CD4-positive, alpha-beta memory T cell (primary cell): ENCODE measurements at regions of chr14 and their contacts with region 1.

Region 1: GRCh38 chr14:55446218-55446654 is 5.8 kb upstream of the TBPL2 start:
- DNase-seq: peak; percentile 40 to 57 (median 53)
- H3K4me3 ChIP-seq: no peak overlapping the region
- H3K4me3 Mint-ChIP-seq: no peak overlapping the region
- H3K27ac ChIP-seq: no peak overlapping the region
- H3K27ac Mint-ChIP-seq: no peak overlapping the region
- H3K4me1 ChIP-seq: no peaks in the 10 kb centered on the region
- H3K4me1 Mint-ChIP-seq: peaks cover 0 to 3% (median 1%) of the 10 kb centered on the region in 4 donors
- H3K27me3 ChIP-seq: no peaks in the 10 kb centered on the region
- H3K27me3 Mint-ChIP-seq: peaks cover 0 to 1% of the 10 kb centered on the region in 2 donors

Region 2: DNA sequence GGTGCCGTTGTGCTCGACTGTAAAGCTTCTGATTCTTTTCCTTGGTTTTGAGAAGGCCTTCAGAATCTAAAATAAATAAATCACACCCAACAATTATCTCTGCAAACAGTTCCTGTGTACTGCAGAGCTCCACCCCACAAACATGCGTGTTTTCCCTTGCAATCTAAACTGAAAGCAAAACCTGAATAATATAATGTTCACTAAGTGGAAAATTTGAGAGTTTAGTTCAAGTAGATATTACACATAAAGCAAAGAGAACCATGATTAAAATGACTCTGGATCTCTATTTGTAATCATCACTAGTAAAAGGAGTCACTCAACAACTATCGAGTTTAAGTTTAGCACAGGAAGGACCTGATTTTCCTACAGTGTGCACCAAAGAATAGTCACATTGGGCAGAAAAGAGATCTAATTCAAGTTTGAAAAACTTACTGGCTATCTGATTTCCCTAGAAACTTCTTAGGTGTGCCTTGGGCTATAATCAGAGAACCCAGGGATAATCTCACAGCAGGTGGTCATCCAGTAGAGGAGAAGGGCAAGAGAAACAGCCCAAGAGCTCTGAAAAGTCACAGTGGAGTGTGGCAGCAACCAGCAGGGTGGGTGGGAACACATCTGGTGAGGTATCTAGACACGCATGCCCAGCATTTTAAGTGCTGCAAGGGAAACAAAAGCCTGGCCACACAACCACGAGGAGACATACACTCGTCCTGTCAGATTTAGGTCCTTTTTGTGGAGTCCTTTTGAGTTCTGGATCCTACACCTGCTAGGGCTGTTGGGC is 60.0 kb before region 1 on chr14:
- CTCF ChIA-PET with region 1: interaction called, 10 read pairs
- POLR2A ChIA-PET with region 1: no interaction called
- intact Hi-C with region 1: no loop called
- DNase-seq: peak in 4 of 5 donors; percentile 13 to 39 (median 16)
- H3K4me3 ChIP-seq: peak overlapping the region in 1 of 2 donors; percentile 23
- H3K4me3 Mint-ChIP-seq: peak overlapping the region; percentile 56 to 86 (median 84)
- H3K27ac ChIP-seq: peak overlapping the region; percentile 59
- H3K27ac Mint-ChIP-seq: peak overlapping the region; percentile 83 to 98 (median 93)
- H3K4me1 ChIP-seq: peaks cover 19% of the 10 kb centered on the region
- H3K4me1 Mint-ChIP-seq: peaks cover 24 to 39% (median 25%) of the 10 kb centered on the region in 4 donors
- H3K27me3 ChIP-seq: no peaks in the 10 kb centered on the region
- H3K27me3 Mint-ChIP-seq: no peaks in the 10 kb centered on the region

Region 3: GRCh38 chr14:55425091-55425490 is 21.1 kb before region 1 on chr14:
- CTCF ChIA-PET with region 1: interaction called, 31 read pairs
- POLR2A ChIA-PET with region 1: no interaction called
- intact Hi-C with region 1: no loop called
- DNase-seq: no peak
- H3K4me3 ChIP-seq: no peak overlapping the region
- H3K4me3 Mint-ChIP-seq: no peak overlapping the region
- H3K27ac ChIP-seq: no peak overlapping the region
- H3K27ac Mint-ChIP-seq: no peak overlapping the region
- H3K4me1 ChIP-seq: peaks cover 4% of the 10 kb centered on the region
- H3K4me1 Mint-ChIP-seq: peaks cover 3 to 5% (median 4%) of the 10 kb centered on the region in 4 donors
- H3K27me3 ChIP-seq: no peaks in the 10 kb centered on the region
- H3K27me3 Mint-ChIP-seq: no peaks in the 10 kb centered on the region

Region 4: GRCh38 chr14:55482936-55483605 is 36.8 kb after region 1 on chr14:
- CTCF ChIA-PET with region 1: interaction called, 10 read pairs
- POLR2A ChIA-PET with region 1: no interaction called
- intact Hi-C with region 1: no loop called
- DNase-seq: no peak
- H3K4me3 ChIP-seq: no peak overlapping the region
- H3K4me3 Mint-ChIP-seq: no peak overlapping the region
- H3K27ac ChIP-seq: no peak overlapping the region
- H3K27ac Mint-ChIP-seq: no peak overlapping the region
- H3K4me1 ChIP-seq: no peaks in the 10 kb centered on the region
- H3K4me1 Mint-ChIP-seq: no peaks in the 10 kb centered on the region
- H3K27me3 ChIP-seq: no peaks in the 10 kb centered on the region
- H3K27me3 Mint-ChIP-seq: peaks cover 0 to 3% of the 10 kb centered on the region in 2 donors

Region 5: GRCh38 chr14:55762595-55763232 is 316.5 kb after region 1 on chr14:
- CTCF ChIA-PET with region 1: no interaction called
- POLR2A ChIA-PET with region 1: no interaction called
- intact Hi-C with region 1: no loop called
- DNase-seq: peak in 4 of 5 donors; percentile 17 to 63 (median 25)
- H3K4me3 ChIP-seq: no peak overlapping the region
- H3K4me3 Mint-ChIP-seq: peak overlapping the region in 7 of 8 donors; percentile 41 to 72 (median 55)
- H3K27ac ChIP-seq: peak overlapping the region; percentile 5
- H3K27ac Mint-ChIP-seq: peak overlapping the region; percentile 19 to 97 (median 79)
- H3K4me1 ChIP-seq: peaks cover 11% of the 10 kb centered on the region
- H3K4me1 Mint-ChIP-seq: peaks cover 5 to 17% (median 12%) of the 10 kb centered on the region in 4 donors
- H3K27me3 ChIP-seq: no peaks in the 10 kb centered on the region
- H3K27me3 Mint-ChIP-seq: peaks cover 4 to 5% of the 10 kb centered on the region in 2 donors

Region 6: DNA sequence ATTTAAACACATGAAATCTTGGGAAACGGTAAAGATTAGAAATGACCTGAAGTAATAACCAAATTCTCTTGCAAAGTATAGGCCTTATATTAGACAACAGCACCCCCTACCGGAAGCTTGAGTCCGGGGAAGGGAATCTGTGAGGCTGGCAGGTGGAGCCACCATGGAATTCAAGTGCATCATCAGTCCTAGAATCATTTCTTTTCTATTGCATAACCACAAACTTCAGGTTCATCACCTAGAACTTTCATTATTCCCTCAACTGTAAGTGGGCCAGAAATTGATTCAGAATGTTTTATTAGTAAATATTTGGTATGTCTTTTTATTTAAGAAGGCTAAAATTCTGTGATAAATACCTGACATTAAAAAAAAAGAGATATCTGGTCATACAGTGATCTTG is 1871.1 kb after region 1 on chr14:
- CTCF ChIA-PET with region 1: interaction called, 3 read pairs
- POLR2A ChIA-PET with region 1: no interaction called
- intact Hi-C with region 1: loop called (anchors 10 kb)
- DNase-seq: peak; percentile 65 to 73 (median 69)
- H3K4me3 ChIP-seq: no peak overlapping the region
- H3K4me3 Mint-ChIP-seq: no peak overlapping the region
- H3K27ac ChIP-seq: no peak overlapping the region
- H3K27ac Mint-ChIP-seq: no peak overlapping the region
- H3K4me1 ChIP-seq: no peaks in the 10 kb centered on the region
- H3K4me1 Mint-ChIP-seq: peaks cover 0 to 6% (median 4%) of the 10 kb centered on the region in 4 donors
- H3K27me3 ChIP-seq: no peaks in the 10 kb centered on the region
- H3K27me3 Mint-ChIP-seq: peaks cover 2 to 8% of the 10 kb centered on the region in 2 donors